Natural killer cell (primary cell): ENCODE measurements at regions of chr17 and their contacts with region 1.

Region 1: GRCh38 chr17:73643001-73643851 is 1.0 kb downstream of the SDK2 start:
- DNase-seq: peak; percentile 19 to 47
- ATAC-seq: peak in 2 of 3 donors; percentile 47 to 62
- H3K4me3 ChIP-seq: peak overlapping the region; percentile 13
- H3K4me3 Mint-ChIP-seq: peak overlapping the region; percentile 59
- H3K27ac ChIP-seq: no peak overlapping the region
- H3K27ac Mint-ChIP-seq: no peak overlapping the region
- H3K4me1 ChIP-seq: peaks cover 34% of the 10 kb centered on the region
- H3K4me1 Mint-ChIP-seq: peaks cover 0 to 11% of the 10 kb centered on the region in 2 donors
- H3K27me3 ChIP-seq: peaks cover 31% of the 10 kb centered on the region
- H3K27me3 Mint-ChIP-seq: peaks cover 45 to 57% of the 10 kb centered on the region in 2 donors
- CTCF ChIP-seq: no peak

Region 2: DNA sequence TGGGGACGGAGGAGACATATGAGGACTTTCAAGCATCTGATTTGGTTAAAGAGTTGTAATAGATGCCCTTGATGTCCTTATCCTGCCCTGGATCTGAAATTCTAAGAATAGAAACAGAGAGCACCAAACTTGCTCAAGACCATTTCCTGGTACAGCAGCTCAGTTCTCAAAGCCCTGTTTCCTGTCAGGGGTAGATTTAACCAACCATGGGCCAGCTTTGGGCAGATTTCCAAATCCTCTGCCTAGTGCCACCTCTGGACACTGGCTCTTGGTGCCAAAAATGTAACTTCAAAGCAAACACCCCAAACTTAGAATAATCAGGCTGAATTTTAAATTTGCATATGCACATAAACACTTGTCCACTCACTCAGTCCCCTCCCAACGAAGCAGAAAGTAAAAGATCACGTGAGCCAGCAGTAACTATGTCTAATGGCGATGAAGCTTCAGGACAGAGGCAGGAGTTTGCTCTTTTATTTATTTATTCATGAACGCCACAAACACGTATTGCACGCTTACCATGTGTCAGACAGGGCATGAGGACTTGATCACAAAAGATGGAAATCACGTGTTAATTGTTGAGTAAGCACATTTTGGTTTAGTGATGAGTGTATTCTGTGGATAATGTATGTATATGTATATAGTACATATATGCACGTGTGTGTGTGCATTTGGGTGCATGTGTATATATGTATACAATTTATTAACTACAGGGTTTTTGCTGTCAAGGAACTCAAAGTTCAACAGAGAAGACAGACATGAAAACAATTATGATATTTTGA is 24.1 kb after region 1 on chr17:
- intact Hi-C with region 1: no loop called
- DNase-seq: peak in 1 of 2 donors; percentile 33
- ATAC-seq: peak; percentile 75 to 84 (median 79)
- H3K4me3 ChIP-seq: no peak overlapping the region
- H3K4me3 Mint-ChIP-seq: peak overlapping the region; percentile 78
- H3K27ac ChIP-seq: no peak overlapping the region
- H3K27ac Mint-ChIP-seq: peak overlapping the region; percentile 44 to 84
- H3K4me1 ChIP-seq: peaks cover 17% of the 10 kb centered on the region
- H3K4me1 Mint-ChIP-seq: peaks cover 21 to 25% of the 10 kb centered on the region in 2 donors
- H3K27me3 ChIP-seq: no peaks in the 10 kb centered on the region
- H3K27me3 Mint-ChIP-seq: peaks cover 12 to 32% of the 10 kb centered on the region in 2 donors
- CTCF ChIP-seq: no peak

Region 3: GRCh38 chr17:73956669-73957465 is 313.6 kb after region 1 on chr17:
- intact Hi-C with region 1: loop called (anchors 5 kb)
- DNase-seq: peak; percentile 58 to 71
- ATAC-seq: peak; percentile 62 to 72 (median 67)
- H3K4me3 ChIP-seq: no peak overlapping the region
- H3K4me3 Mint-ChIP-seq: no peak overlapping the region
- H3K27ac ChIP-seq: no peak overlapping the region
- H3K27ac Mint-ChIP-seq: no peak overlapping the region
- H3K4me1 ChIP-seq: peaks cover 13% of the 10 kb centered on the region
- H3K4me1 Mint-ChIP-seq: no peaks in the 10 kb centered on the region
- H3K27me3 ChIP-seq: peaks cover 7% of the 10 kb centered on the region
- H3K27me3 Mint-ChIP-seq: no peaks in the 10 kb centered on the region
- CTCF ChIP-seq: peak; percentile 67